Activated T-helper 1 cell treated with anti-CD3 and anti-CD28 coated beads, Interleukin-12 subunit alpha, Interleukin-12 subunit beta, Interleukin-2, Interleukin-4 antibody, amounts not matched to agents 30 ng/mL and 10 ng/mL and 1 ng/mL, durations not matched to agents 14 hours and 24 hours and 36 hours (primary cell): ENCODE measurements at regions of chr1 and their contacts with region 1.

Region 1: GRCh38 chr1:156797212-156797871 is 19.3 kb downstream of the SH2D2A start:
- DNase-seq: peak; percentile 43
- H3K4me3 Mint-ChIP-seq: no peak overlapping the region
- H3K27ac Mint-ChIP-seq: no peak overlapping the region
- H3K4me1 Mint-ChIP-seq: peaks cover 27% of the 10 kb centered on the region
- H3K27me3 Mint-ChIP-seq: no peaks in the 10 kb centered on the region

Region 2: GRCh38 chr1:155960076-155960745 is 837.1 kb before region 1 on chr1:
- intact Hi-C with region 1: no loop called
- DNase-seq: no peak
- H3K4me3 Mint-ChIP-seq: no peak overlapping the region
- H3K27ac Mint-ChIP-seq: peak overlapping the region; percentile 58
- H3K4me1 Mint-ChIP-seq: peaks cover 8% of the 10 kb centered on the region
- H3K27me3 Mint-ChIP-seq: no peaks in the 10 kb centered on the region

Region 3: GRCh38 chr1:156838981-156839410 is 41.7 kb after region 1 on chr1:
- intact Hi-C with region 1: loop called (anchors 2 kb)
- DNase-seq: no peak
- H3K4me3 Mint-ChIP-seq: peak overlapping the region; percentile 24
- H3K27ac Mint-ChIP-seq: peak overlapping the region; percentile 54
- H3K4me1 Mint-ChIP-seq: peaks cover 58% of the 10 kb centered on the region
- H3K27me3 Mint-ChIP-seq: peaks cover 15% of the 10 kb centered on the region

Region 4: GRCh38 chr1:156920233-156921052 is 123.1 kb after region 1 on chr1 and contains the start of gene LRRC71:
- intact Hi-C with region 1: loop called (anchors 2 kb)
- DNase-seq: peak; percentile 64
- H3K4me3 Mint-ChIP-seq: no peak within 1 kb of the TSS
- H3K27ac Mint-ChIP-seq: no peak within 1 kb of the TSS
- H3K4me1 Mint-ChIP-seq: peaks cover 4% of the 10 kb centered on the region
- H3K27me3 Mint-ChIP-seq: peaks cover 66% of the 10 kb centered on the region
- total RNA-seq, gene LRRC71: not detected in 2 replicates